SK-N-SH (cell line): ENCODE measurements at regions of chr4 and their contacts with region 1.

Region 1: GRCh38 chr4:185096032-185096653 is 46.9 kb upstream of the SLC25A4 start:
- DNase-seq: peak; percentile 60
- H3K4me3 ChIP-seq: no peak overlapping the region
- H3K27ac ChIP-seq: no peak overlapping the region
- H3K4me1 ChIP-seq: peaks cover 0 to 6% of the 10 kb centered on the region in 2 experiments; a peak in 1 of 4 replicates
- H3K27me3 ChIP-seq: no peaks in the 10 kb centered on the region
- CTCF ChIP-seq: peak; percentile 77
- EP300 ChIP-seq: no peak
- RAD21 ChIP-seq: peak; percentile 82

Region 2: DNA sequence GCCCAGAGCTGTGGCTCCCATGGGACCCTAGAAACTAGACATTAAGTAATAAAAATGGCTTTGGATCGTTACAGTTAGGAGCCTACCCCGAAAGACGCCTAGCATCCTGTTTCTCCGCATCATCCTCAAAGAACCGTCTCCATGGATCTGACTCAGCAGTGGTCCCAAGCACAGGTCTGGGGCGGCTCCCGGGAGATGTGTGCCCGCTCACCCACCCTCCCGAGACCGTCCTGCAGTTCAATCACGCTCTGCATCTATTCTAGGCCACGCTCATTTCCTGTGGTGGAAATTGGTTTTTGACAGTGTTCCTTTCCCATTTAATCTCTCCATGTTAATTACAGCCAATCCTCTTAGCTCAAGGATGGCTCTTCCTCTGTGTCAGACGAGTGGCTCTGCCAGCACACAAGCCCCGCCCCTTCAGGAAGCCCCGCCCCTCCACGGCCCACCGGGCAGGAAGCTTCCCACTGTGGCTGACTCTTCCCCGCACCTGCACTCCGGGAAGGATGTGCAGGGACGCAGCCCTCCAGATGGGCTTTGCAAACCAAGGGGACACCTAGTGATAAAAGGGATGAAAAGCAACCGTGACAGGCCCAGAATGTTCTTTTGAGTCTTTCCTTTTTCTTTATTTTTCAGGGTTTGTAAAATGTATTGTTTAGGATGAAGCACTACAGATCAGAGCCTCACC is 112.3 kb before region 1 on chr4:
- CTCF ChIA-PET with region 1: interaction called, 11 read pairs
- POLR2A ChIA-PET with region 1: no interaction called
- DNase-seq: peak; percentile 95
- H3K4me3 ChIP-seq: peak overlapping the region in 1 of 2 experiments; percentile 35; a peak in 2 of 4 replicates
- H3K27ac ChIP-seq: peak overlapping the region in 1 of 2 experiments; percentile 67; a peak in 2 of 4 replicates
- H3K4me1 ChIP-seq: peaks cover 0 to 21% of the 10 kb centered on the region in 2 experiments; a peak in 2 of 4 replicates
- H3K27me3 ChIP-seq: no peaks in the 10 kb centered on the region; the same call in 1 of the 2 replicates
- CTCF ChIP-seq: peak; percentile 45
- EP300 ChIP-seq: no peak
- RAD21 ChIP-seq: peak; percentile 92

Region 3: DNA sequence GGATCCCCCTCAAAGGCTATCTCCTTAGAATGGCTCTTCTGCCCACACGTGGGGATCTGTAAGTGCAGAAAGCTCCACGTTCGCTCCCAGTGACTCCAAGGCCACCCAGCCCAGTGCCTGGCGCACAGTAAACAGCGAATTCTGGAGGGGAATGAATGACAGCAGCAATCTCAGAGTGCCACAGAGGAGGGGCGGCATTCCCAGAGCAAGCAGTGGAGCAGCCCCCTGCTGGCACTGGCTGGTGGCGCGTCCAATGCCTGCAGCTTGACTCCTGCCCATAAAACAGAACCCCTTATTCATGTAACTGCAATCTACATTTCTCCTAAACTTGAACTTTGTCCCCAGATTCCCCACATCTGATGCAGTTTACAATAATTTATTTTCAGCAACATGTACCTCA is 84.7 kb before region 1 on chr4:
- CTCF ChIA-PET with region 1: interaction called, 29 read pairs
- POLR2A ChIA-PET with region 1: no interaction called
- DNase-seq: peak; percentile 82
- H3K4me3 ChIP-seq: no peak overlapping the region; a peak in 1 of 4 replicates
- H3K27ac ChIP-seq: no peak overlapping the region
- H3K4me1 ChIP-seq: no peaks in the 10 kb centered on the region; a peak in 1 of 4 replicates
- H3K27me3 ChIP-seq: peaks cover 39% of the 10 kb centered on the region; the same call in 1 of the 2 replicates
- CTCF ChIP-seq: peak; percentile 59
- EP300 ChIP-seq: no peak
- RAD21 ChIP-seq: peak; percentile 60

Region 4: GRCh38 chr4:185033950-185034349 is 62.2 kb before region 1 on chr4:
- CTCF ChIA-PET with region 1: interaction called, 157 read pairs
- POLR2A ChIA-PET with region 1: no interaction called
- DNase-seq: no peak
- H3K4me3 ChIP-seq: no peak overlapping the region
- H3K27ac ChIP-seq: no peak overlapping the region
- H3K4me1 ChIP-seq: no peaks in the 10 kb centered on the region
- H3K27me3 ChIP-seq: peaks cover 7% of the 10 kb centered on the region; the same call in 1 of the 2 replicates
- CTCF ChIP-seq: no peak
- EP300 ChIP-seq: no peak
- RAD21 ChIP-seq: no peak

Region 5: GRCh38 chr4:185071236-185071811 is 24.8 kb before region 1 on chr4:
- CTCF ChIA-PET with region 1: interaction called, 18 read pairs
- POLR2A ChIA-PET with region 1: no interaction called
- DNase-seq: no peak
- H3K4me3 ChIP-seq: no peak overlapping the region
- H3K27ac ChIP-seq: no peak overlapping the region
- H3K4me1 ChIP-seq: no peaks in the 10 kb centered on the region
- H3K27me3 ChIP-seq: no peaks in the 10 kb centered on the region; the same call in 1 of the 2 replicates
- CTCF ChIP-seq: no peak
- EP300 ChIP-seq: no peak
- RAD21 ChIP-seq: no peak

Region 6: DNA sequence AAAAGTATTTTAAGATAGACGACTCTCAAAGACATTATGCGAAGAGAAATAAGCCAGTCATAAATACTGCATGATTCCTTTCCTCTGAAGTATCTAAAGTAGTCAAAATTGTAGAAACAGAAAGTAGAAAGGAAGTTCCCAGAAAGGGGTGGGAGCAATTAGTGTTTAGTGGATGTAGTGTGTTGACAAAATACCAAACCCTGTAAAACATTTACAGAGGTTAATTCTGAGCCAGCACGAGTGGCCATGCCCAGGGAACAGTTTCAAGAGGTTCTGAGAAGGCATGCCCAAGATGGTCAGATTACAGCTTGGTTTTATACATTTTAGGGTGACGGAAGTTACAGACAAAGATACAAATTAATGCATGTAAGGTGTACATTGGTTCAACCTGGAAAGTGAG is 12.5 kb after region 1 on chr4:
- CTCF ChIA-PET with region 1: interaction called, 20 read pairs
- POLR2A ChIA-PET with region 1: no interaction called
- DNase-seq: no peak
- H3K4me3 ChIP-seq: no peak overlapping the region
- H3K27ac ChIP-seq: no peak overlapping the region
- H3K4me1 ChIP-seq: peaks cover 0 to 21% of the 10 kb centered on the region in 2 experiments; a peak in 3 of 4 replicates
- H3K27me3 ChIP-seq: no peaks in the 10 kb centered on the region
- CTCF ChIP-seq: no peak
- EP300 ChIP-seq: no peak
- RAD21 ChIP-seq: no peak

Region 7: DNA sequence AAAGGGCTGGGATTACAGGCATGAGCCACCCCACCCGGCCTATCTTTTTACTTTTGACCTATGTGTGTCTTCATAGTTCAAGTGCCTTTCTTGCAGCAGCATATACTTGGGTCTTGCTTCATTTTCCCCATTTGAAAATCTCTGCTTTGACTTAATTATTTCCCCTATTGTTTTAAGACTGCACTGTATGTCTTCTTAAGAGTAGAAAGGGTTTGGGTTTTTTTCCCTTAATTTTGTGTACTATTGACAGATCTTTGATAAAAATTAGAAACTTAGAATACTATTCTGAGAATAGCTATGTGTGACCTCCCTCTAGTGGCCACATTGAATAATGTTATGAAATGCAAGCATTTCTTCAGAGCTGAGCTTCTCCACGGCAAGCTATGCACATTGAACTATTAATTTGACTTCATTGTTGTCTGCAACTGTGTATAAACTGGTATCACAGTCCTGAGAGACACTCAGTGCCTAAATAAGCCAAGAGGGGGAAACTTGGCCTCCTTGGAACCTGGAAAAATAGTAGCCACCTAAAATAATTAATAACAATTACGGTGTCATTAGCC is 38.2 kb after region 1 on chr4:
- CTCF ChIA-PET with region 1: interaction called, 32 read pairs
- POLR2A ChIA-PET with region 1: no interaction called
- DNase-seq: peak; percentile 68
- H3K4me3 ChIP-seq: no peak overlapping the region; a peak in 1 of 4 replicates
- H3K27ac ChIP-seq: no peak overlapping the region
- H3K4me1 ChIP-seq: no peaks in the 10 kb centered on the region
- H3K27me3 ChIP-seq: no peaks in the 10 kb centered on the region
- CTCF ChIP-seq: peak; percentile 91
- EP300 ChIP-seq: no peak
- RAD21 ChIP-seq: peak; percentile 89

Region 8: DNA sequence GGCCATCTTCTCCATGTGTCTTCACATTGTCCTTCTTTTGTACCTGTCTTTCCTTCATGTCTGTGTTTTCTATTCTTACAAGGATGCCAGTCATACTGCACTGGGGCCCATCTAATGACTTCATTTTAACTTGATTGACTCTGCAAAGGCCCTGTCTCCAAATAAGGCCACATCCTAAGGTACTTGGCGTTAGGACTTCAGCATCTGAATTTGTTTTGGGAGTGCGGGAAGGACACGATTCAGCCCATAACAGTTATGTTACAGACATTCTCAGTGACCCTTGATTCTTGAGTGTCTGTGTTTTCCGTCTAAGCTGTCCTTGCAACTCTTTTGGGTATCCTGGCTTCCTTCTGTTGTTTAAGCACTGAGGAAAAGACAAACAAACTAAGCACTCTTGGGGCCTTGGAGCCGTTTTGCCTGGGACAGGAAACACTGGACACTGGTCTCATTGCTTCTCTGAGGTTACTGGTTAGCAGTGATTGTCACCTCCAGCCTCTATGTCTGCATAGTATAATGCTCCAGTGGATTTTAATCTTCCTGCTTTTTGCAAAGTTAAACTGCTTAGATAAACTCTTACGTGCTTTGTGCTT is 194.0 kb after region 1 on chr4:
- CTCF ChIA-PET with region 1: no interaction called
- POLR2A ChIA-PET with region 1: no interaction called
- DNase-seq: no peak
- H3K4me3 ChIP-seq: no peak overlapping the region
- H3K27ac ChIP-seq: no peak overlapping the region
- H3K4me1 ChIP-seq: peaks cover 0 to 3% of the 10 kb centered on the region in 2 experiments; a peak in 1 of 4 replicates
- H3K27me3 ChIP-seq: no peaks in the 10 kb centered on the region
- CTCF ChIP-seq: no peak
- EP300 ChIP-seq: no peak
- RAD21 ChIP-seq: no peak